ENCODE measurements at regions of chr15 and their contacts with region 1.

Region 1: DNA sequence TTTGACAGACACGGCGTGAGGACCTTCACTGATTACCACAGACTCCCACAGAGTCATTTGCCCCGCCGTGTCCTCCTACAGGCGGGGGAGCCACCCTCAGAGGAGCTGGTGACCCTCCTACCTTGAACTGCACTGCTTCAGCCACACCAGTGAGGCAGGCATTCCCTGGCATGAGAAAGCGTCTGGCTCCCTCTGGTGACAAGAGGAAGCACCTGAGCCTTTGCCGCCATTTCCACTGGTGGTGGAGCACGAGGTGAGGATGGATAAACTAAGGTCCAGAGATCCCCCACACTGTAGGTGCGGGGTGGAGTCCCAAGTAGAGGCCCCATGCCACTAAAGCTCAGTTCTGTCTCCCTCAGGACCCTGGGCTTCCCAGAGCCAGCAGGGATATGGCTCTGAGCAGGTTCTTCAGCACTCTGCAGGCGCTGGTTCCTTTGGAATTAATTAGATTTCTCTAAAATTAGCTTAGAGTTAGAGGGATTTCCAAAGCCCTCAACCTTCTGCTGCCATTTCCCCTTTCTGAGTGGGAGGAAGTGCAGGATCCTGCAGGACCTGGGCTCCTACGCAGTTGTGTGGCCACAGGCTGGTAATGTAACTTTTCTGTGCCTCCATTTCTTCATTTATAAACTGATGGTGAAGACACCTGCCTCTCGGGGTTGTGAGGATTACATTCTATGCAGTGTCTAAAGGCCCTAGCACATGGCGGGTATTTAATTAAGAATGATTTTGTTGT is 224.0 kb downstream of the SLCO3A1 start:
- DNase-seq: peak; percentile 77
- ATAC-seq: peak; percentile 80
- H3K4me3 ChIP-seq: no peak overlapping the region
- H3K27ac ChIP-seq: no peak overlapping the region
- H3K4me1 ChIP-seq: peaks cover 53% of the 10 kb centered on the region
- H3K27me3 ChIP-seq: no peaks in the 10 kb centered on the region
- CTCF ChIP-seq: peak; percentile 78

Region 2: DNA sequence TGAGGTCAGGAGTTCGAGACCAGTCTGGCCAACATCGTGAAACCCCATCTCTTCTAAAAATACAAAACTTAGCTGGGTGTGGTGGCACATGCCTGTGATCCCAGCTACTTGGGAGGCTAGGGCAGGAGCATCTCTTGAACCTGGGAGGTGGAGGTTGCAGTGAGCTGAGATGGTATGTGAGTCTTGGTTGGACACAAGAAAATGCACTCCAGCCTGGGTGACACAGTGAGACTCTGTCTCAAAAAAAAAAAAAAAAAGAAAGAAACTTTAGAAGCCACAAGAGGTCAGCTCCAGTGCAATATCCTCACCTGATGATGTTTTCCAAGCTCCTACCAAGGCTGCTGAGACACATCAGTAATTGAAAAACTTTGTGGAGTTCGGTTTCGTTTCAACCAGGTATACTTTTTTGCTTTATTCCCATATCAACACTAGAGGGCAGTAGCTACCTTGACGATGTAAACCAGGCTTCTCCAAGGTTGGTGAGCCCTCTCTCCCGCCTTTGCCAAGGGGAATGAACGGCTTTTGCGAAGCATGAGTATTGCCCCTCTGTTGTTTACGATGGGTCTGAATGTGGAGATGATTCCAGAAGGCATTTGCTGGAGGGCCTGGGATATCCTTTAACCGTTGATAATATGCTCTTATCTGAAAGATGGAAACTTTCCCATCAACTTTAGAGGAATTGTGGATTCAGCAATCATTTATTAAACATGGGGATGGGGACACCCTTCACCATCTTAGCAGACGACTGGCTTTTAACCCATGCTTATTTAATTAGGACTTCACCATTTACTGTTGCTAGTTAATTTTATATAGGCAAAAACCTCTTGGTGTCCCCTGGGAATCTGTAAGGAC is 774.7 kb before region 1 on chr15:
- intact Hi-C with region 1: loop called (anchors 10 kb)
- DNase-seq: no peak
- ATAC-seq: peak; percentile 94
- H3K4me3 ChIP-seq: no peak overlapping the region
- H3K27ac ChIP-seq: no peak overlapping the region
- H3K4me1 ChIP-seq: peaks cover 6% of the 10 kb centered on the region
- H3K27me3 ChIP-seq: peaks cover 20% of the 10 kb centered on the region
- CTCF ChIP-seq: peak; percentile 80

Region 3: DNA sequence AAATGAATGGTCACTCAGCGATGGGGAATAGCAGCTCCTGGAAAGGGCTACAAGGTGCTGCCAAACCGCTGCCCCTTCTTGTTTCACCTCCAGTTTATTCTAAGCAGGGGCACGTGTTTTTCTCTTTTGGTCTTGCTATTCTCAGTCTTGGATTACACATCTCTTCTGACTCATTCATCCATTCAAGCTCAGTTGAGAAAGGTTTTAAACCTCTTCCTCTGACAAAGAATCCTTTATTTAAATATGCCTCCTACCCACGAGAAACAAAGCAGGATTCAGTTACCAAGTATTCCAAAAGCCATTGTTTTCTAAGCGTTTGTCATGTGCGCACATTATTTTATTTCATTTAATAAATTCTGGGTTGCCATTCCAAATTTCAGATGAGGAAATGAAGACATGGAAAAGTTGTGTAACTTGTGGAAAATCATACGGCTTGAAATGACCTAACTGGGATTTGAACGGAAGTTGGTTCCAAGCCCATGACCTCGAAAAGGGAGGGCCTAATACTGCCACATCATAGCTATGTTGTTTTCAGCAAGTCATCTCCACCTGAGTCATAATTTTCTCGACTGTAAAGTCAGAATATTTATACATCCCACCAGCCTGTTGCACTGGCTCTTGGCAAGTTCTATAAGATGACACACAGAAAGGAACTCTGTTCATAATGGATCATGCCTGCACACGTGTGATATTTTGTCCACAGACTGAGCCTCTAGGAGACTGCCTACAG is 516.0 kb before region 1 on chr15:
- intact Hi-C with region 1: no loop called
- DNase-seq: no peak
- ATAC-seq: no peak
- H3K4me3 ChIP-seq: no peak overlapping the region
- H3K27ac ChIP-seq: no peak overlapping the region
- H3K4me1 ChIP-seq: no peaks in the 10 kb centered on the region
- H3K27me3 ChIP-seq: no peaks in the 10 kb centered on the region
- CTCF ChIP-seq: no peak

Region 4: GRCh38 chr15:91839867-91840266 is 237.7 kb before region 1 on chr15:
- intact Hi-C with region 1: no loop called
- DNase-seq: no peak
- ATAC-seq: no peak
- H3K4me3 ChIP-seq: no peak overlapping the region
- H3K27ac ChIP-seq: no peak overlapping the region
- H3K4me1 ChIP-seq: no peaks in the 10 kb centered on the region
- H3K27me3 ChIP-seq: no peaks in the 10 kb centered on the region
- CTCF ChIP-seq: no peak

Region 5: DNA sequence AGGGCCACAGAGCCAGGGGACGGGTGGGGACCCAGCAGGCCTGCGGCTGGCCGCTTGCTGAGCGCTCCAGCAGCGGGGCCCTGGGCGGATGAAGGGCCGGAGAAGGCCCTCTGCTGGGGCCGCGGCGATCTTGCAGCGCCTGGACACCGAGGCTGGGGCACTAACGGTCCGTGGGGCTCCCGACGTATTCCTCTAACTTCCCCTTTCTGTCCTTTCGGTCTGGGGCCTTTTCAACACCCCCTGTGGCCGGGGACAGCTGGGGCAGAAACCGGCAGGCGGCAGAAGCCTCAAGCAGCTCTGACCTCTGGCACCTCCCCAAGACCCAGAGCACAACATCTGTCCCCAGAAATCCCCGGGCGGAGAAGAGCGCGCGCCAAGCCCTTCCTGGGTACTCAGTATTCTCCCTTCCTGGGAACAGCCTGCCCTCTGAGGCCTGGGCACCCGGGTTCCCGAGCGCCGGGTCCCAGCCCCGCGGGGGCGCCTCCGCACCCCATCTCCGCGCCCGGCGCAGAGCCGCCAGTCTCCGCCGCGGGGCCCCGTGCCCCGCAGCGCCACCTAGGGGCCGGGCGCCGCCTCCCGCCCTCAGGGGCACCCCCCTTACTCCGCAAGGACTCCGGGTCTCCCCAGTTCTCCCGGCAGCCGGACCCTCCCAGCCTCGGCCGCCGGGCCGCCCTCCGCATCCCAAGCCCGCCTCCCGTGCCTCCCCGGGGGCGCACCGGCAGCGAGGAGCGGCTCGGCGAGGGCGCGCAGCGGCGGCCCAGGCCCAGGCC is 224.6 kb before region 1 on chr15:
- intact Hi-C with region 1: loop called (anchors 5 kb)
- DNase-seq: peak; percentile 91
- ATAC-seq: peak; percentile 87
- H3K4me3 ChIP-seq: peak overlapping the region; percentile 77
- H3K27ac ChIP-seq: peak overlapping the region; percentile 88
- H3K4me1 ChIP-seq: peaks cover 49% of the 10 kb centered on the region
- H3K27me3 ChIP-seq: no peaks in the 10 kb centered on the region
- CTCF ChIP-seq: peak; percentile 65

Measured in upper lobe of right lung (tissue), 1 donor.